HepG2 (cell line): ENCODE measurements at regions of chr2 and their contacts with region 1.

Region 1: DNA sequence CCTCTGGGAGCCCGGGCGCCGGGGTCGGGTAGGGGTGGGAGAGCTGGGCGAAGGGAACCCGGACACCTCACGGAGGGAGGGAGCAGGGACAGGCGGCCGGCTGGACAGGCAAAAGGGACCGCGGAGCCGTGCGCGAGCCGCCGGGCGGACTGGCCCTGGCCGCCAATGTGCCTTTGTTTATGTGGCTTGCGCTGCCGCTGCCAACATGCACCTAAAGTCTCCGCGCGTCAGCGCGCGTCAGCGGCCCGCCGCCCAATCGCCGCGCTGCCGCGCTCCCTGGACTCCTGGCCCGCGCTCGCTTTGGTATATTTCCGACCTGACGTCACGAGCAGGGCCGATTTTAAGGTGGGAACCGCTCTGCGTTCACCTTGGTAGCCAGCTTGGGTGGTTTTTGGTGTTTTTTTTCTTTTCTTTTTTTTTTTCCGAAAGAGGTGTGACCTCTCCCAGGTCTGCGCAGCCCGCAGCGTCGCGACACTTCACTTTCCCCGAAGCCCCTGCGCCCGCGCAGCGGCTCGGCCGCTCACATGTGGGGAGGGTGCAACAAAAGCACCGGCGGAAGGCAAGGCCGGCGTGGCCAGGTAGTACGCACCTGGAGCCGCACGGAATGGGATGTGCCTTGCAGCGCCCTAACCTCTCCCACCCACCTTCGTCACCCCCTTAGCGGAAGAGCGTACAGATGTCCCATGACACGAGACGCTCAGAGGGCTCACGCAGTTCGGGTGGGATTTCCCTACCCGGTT is at the start of gene NR4A2:
- DNase-seq: peak; percentile 16
- ATAC-seq: peak; percentile 60
- H3K4me3 ChIP-seq: peak within 1 kb of the TSS; percentile 51 to 77 (median 63)
- H3K27ac ChIP-seq: no peak within 1 kb of the TSS
- H3K4me1 ChIP-seq: peaks cover 30% of the 10 kb centered on the region
- H3K27me3 ChIP-seq: peaks cover 23 to 75% of the 10 kb centered on the region in 2 experiments
- CTCF ChIP-seq: no peak
- EP300 ChIP-seq: no peak
- POLR2A ChIP-seq: no peak
- RAD21 ChIP-seq: no peak
- total RNA-seq, gene NR4A2: not detected in 2 replicates

Region 2: GRCh38 chr2:155975734-155976133 is 357.0 kb before region 1 on chr2:
- CTCF ChIA-PET with region 1: no interaction called
- POLR2A ChIA-PET with region 1: no interaction called
- in situ Hi-C with region 1: no loop called
- intact Hi-C with region 1: loop called (anchors 10 kb)
- DNase-seq: peak; percentile 91
- ATAC-seq: peak; percentile 100
- H3K4me3 ChIP-seq: no peak overlapping the region; a peak in 1 of 6 replicates
- H3K27ac ChIP-seq: peak overlapping the region; percentile 56
- H3K4me1 ChIP-seq: peaks cover 44% of the 10 kb centered on the region
- H3K27me3 ChIP-seq: no peaks in the 10 kb centered on the region
- CTCF ChIP-seq: no peak
- EP300 ChIP-seq: peak; percentile 60 to 90; a peak in 3 of 4 replicates
- POLR2A ChIP-seq: no peak
- RAD21 ChIP-seq: peak; percentile 29; the same call in 1 of the 2 replicates

Region 3: GRCh38 chr2:156189143-156189542 is 143.6 kb before region 1 on chr2:
- CTCF ChIA-PET with region 1: no interaction called
- POLR2A ChIA-PET with region 1: no interaction called
- in situ Hi-C with region 1: no loop called
- intact Hi-C with region 1: loop called (anchors 2 kb)
- DNase-seq: peak; percentile 83
- ATAC-seq: peak; percentile 100
- H3K4me3 ChIP-seq: peak overlapping the region in 1 of 3 experiments; percentile 22; a peak in 1 of 6 replicates
- H3K27ac ChIP-seq: peak overlapping the region; percentile 30
- H3K4me1 ChIP-seq: peaks cover 22% of the 10 kb centered on the region
- H3K27me3 ChIP-seq: no peaks in the 10 kb centered on the region
- CTCF ChIP-seq: no peak
- EP300 ChIP-seq: peak in 1 of 2 experiments; percentile 68; a peak in 1 of 4 replicates
- POLR2A ChIP-seq: no peak
- RAD21 ChIP-seq: no peak